ENCODE measurements at regions of chr7 and their contacts with region 1.

Region 1: DNA sequence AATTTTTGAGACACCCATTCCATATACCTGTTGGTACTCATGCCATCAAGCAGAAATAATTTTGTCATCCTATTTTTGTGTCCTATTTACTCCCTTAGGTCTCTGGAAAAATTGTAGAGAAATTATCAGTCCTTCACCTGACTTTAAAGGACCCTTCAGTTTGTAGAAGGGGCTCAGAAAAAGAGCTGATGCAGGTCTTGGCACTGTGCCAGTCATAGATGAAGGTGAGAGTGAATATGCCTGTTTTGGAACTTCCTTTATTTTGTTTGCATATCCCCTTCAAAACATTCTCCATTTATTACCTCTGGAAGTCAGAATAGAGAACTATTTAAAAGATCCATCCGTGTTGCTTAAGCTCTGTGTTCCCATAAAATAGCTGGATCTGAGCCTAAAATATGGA is 321.0 kb upstream of the TPK1 start:
- DNase-seq: no peak
- ATAC-seq: no peak
- H3K4me3 ChIP-seq: no peak overlapping the region
- H3K27ac ChIP-seq: no peak overlapping the region
- H3K4me1 ChIP-seq: no peaks in the 10 kb centered on the region
- H3K27me3 ChIP-seq: peaks cover 0 to 3% (median 0%) of the 10 kb centered on the region in 7 donors
- CTCF ChIP-seq: no peak

Region 2: DNA sequence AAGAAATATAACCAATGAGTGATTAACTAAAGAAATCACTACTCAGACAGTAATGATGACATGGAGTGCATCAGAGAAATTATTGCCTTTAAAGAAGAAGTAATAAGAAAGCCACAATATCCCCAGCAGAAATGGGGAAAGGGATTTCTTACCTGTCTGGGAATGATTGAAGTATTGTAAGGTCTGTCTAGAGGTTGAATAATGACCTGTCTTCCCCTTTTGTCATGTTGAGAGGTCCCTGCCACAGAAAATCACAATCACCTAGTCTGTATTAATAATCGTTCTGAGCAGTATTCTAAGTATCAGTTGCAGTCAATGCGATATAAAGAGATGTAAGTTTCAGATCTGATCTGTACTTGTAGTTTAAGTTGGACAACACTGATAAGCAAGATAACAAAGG is 28.1 kb after region 1 on chr7:
- intact Hi-C with region 1: loop called in 1 of 10 experiments (anchors 1 kb)
- DNase-seq: no peak
- ATAC-seq: no peak
- H3K4me3 ChIP-seq: no peak overlapping the region
- H3K27ac ChIP-seq: no peak overlapping the region
- H3K4me1 ChIP-seq: no peaks in the 10 kb centered on the region
- H3K27me3 ChIP-seq: no peaks in the 10 kb centered on the region
- CTCF ChIP-seq: no peak

Region 3: GRCh38 chr7:146262527-146262926 is 1105.7 kb after region 1 on chr7:
- intact Hi-C with region 1: no loop called
- DNase-seq: no peak
- ATAC-seq: no peak
- H3K4me3 ChIP-seq: no peak overlapping the region
- H3K27ac ChIP-seq: no peak overlapping the region
- H3K4me1 ChIP-seq: no peaks in the 10 kb centered on the region
- H3K27me3 ChIP-seq: no peaks in the 10 kb centered on the region
- CTCF ChIP-seq: no peak